Activated CD8-positive, alpha-beta T cell treated with anti-CD3 and anti-CD28 coated beads for 36 hours (primary cell): ENCODE measurements at regions of chr3 and their contacts with region 1.

Region 1: GRCh38 chr3:49539659-49540560 is 14.4 kb upstream of the BSN start:
- DNase-seq: peak; percentile 93
- ATAC-seq: peak; percentile 97
- H3K4me3 Mint-ChIP-seq: peak overlapping the region; percentile 67
- H3K27ac Mint-ChIP-seq: peak overlapping the region; percentile 55
- H3K4me1 Mint-ChIP-seq: peaks cover 5% of the 10 kb centered on the region
- H3K27me3 Mint-ChIP-seq: peaks cover 5% of the 10 kb centered on the region
- CTCF ChIP-seq: peak; percentile 78

Region 2: GRCh38 chr3:48739955-48740823 is 799.7 kb before region 1 on chr3:
- CTCF ChIA-PET with region 1: no interaction called
- POLR2A ChIA-PET with region 1: no interaction called
- intact Hi-C with region 1: no loop called
- DNase-seq: peak; percentile 74
- ATAC-seq: peak; percentile 98
- H3K4me3 Mint-ChIP-seq: no peak overlapping the region
- H3K27ac Mint-ChIP-seq: no peak overlapping the region
- H3K4me1 Mint-ChIP-seq: peaks cover 2% of the 10 kb centered on the region
- H3K27me3 Mint-ChIP-seq: no peaks in the 10 kb centered on the region
- CTCF ChIP-seq: peak; percentile 66

Region 3: GRCh38 chr3:49351521-49352011 is 188.3 kb before region 1 on chr3:
- CTCF ChIA-PET with region 1: no interaction called
- POLR2A ChIA-PET with region 1: no interaction called
- intact Hi-C with region 1: no loop called
- DNase-seq: no peak
- ATAC-seq: no peak
- H3K4me3 Mint-ChIP-seq: no peak overlapping the region
- H3K27ac Mint-ChIP-seq: no peak overlapping the region
- H3K4me1 Mint-ChIP-seq: peaks cover 11% of the 10 kb centered on the region
- H3K27me3 Mint-ChIP-seq: no peaks in the 10 kb centered on the region
- CTCF ChIP-seq: no peak

Region 4: DNA sequence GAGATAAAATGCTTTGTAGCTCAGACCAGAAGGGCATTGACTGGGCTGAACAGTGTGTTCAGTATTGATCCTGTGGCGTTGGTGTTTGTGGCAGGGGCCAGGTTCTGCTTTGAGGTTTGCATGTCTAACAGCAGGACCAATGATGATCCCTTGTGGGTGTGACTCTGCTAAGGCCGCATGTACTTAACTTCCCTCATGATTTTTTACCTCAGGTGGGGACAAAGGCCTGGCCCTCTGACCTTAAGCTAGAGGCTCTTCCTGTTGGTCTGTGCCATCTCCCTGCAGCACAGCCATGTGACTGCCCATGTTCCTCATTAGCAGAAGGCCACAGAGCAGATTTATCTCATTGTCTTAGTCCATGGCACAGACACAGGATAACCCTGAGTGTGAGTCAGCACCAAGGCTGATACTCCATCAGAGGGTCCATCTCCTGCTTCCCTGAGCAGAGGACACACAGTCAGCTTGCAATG is 20.0 kb before region 1 on chr3:
- CTCF ChIA-PET with region 1: interaction called, 10 read pairs
- POLR2A ChIA-PET with region 1: no interaction called
- intact Hi-C with region 1: no loop called
- DNase-seq: no peak
- ATAC-seq: no peak
- H3K4me3 Mint-ChIP-seq: no peak overlapping the region
- H3K27ac Mint-ChIP-seq: no peak overlapping the region
- H3K4me1 Mint-ChIP-seq: peaks cover 5% of the 10 kb centered on the region
- H3K27me3 Mint-ChIP-seq: no peaks in the 10 kb centered on the region
- CTCF ChIP-seq: no peak

Region 5: DNA sequence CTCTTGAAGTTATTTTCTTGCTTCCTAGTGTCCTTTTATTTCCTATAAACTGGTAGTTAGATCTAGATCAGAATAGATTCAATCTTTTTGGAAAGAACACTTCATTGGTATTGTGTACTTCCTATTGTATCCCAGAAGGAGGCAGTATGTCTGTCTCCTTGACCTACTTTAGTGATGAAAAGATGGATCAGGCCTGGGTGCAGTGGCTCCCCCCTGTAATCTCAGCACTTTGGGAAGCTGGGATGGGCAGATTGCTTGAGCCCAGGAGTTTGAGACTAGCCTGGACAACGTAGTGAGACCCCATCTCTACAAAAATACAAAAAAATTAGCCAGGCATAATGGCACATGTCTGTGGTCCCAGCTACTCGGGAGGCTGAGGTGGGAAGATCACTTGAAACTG is 26.4 kb after region 1 on chr3:
- CTCF ChIA-PET with region 1: interaction called, 26 read pairs
- POLR2A ChIA-PET with region 1: no interaction called
- intact Hi-C with region 1: no loop called
- DNase-seq: no peak
- ATAC-seq: no peak
- H3K4me3 Mint-ChIP-seq: no peak overlapping the region
- H3K27ac Mint-ChIP-seq: no peak overlapping the region
- H3K4me1 Mint-ChIP-seq: no peaks in the 10 kb centered on the region
- H3K27me3 Mint-ChIP-seq: no peaks in the 10 kb centered on the region
- CTCF ChIP-seq: peak; percentile 37

Region 6: DNA sequence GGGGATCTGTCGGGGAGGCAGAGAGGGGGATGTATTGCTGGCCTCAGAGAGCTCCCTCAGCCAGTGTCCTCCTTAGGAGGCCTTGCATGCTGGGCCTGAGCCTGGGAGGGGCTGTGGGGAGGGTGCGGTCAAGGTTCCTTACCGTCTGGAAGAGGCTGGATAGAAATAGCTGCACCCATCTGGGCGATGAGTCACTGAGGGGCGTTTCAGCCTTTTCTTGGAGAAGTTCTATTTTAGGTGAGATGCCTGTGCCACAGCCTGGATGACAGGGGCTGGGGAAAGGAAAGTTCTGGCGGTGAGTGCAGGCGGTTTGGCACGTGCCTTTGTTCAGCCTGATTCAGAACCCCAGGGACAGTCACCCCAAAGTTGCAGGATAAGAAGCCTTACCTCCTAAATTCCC is 98.5 kb after region 1 on chr3:
- CTCF ChIA-PET with region 1: interaction called, 10 read pairs
- POLR2A ChIA-PET with region 1: no interaction called
- intact Hi-C with region 1: no loop called
- DNase-seq: no peak
- ATAC-seq: no peak
- H3K4me3 Mint-ChIP-seq: no peak overlapping the region
- H3K27ac Mint-ChIP-seq: no peak overlapping the region
- H3K4me1 Mint-ChIP-seq: peaks cover 4% of the 10 kb centered on the region
- H3K27me3 Mint-ChIP-seq: no peaks in the 10 kb centered on the region
- CTCF ChIP-seq: no peak

Region 7: GRCh38 chr3:49668414-49668797 is 128.5 kb after region 1 on chr3:
- CTCF ChIA-PET with region 1: interaction called, 185 read pairs
- POLR2A ChIA-PET with region 1: interaction called, 37 read pairs
- intact Hi-C with region 1: loop called (anchors 1 kb)
- DNase-seq: no peak
- ATAC-seq: no peak
- H3K4me3 Mint-ChIP-seq: no peak overlapping the region
- H3K27ac Mint-ChIP-seq: no peak overlapping the region
- H3K4me1 Mint-ChIP-seq: peaks cover 12% of the 10 kb centered on the region
- H3K27me3 Mint-ChIP-seq: no peaks in the 10 kb centered on the region
- CTCF ChIP-seq: no peak

Region 8: DNA sequence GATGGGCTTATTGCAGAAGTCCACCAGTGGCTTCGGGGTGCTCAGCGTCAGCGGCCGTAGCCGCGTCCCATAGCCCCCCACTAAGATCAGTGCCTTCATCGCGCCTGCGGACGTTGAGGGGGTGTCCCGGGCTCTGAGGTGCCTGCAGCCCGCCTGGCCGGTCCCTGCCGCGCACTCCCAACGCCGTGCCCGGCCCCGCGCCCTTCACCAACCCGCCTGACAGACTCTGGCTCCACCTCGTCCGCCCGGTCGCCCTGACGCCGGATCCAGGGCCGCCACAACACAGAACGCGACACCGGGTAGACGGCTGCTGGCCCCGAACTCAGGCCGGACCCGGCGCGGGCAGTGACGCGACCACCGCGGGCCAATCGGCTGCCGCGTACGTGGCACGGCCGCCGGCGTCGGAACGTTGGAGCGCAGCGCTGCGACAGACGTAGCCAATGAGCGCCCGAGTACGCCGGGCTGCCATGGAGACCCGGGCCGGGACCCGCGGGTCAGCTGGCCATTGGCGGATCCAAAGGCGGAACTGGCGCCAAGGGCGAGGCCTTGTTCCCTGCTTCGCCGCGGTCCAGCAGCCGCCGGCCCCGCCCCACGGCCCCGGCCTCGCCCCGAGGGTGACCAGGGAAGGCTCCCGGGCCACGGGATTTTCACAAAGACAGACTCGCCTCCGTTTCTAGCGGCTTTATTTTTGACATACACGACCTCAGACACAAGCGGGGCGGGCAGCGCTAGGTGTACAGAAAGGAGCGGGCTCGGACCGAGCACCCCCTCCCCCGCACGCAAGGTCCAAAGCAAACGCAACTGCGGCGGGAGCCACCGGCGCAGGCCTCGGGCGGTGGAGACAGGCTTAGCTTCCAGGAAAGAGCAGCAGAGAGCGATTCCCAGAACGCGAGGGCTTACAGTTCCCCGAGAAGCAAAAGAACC is 184.0 kb after region 1 on chr3 and contains the start of gene GMPPB:
- CTCF ChIA-PET with region 1: interaction called, 11 read pairs
- POLR2A ChIA-PET with region 1: interaction called, 3 read pairs
- intact Hi-C with region 1: no loop called
- DNase-seq: peak; percentile 96
- ATAC-seq: peak; percentile 82
- H3K4me3 Mint-ChIP-seq: peak within 1 kb of the TSS; percentile 92
- H3K27ac Mint-ChIP-seq: peak within 1 kb of the TSS; percentile 97
- H3K4me1 Mint-ChIP-seq: peaks cover 21% of the 10 kb centered on the region
- H3K27me3 Mint-ChIP-seq: no peaks in the 10 kb centered on the region
- CTCF ChIP-seq: no peak
- total RNA-seq, gene GMPPB: 34.7 to 35.2 TPM

Region 9: GRCh38 chr3:49865198-49865745 is 325.4 kb after region 1 on chr3:
- CTCF ChIA-PET with region 1: no interaction called
- POLR2A ChIA-PET with region 1: no interaction called
- intact Hi-C with region 1: no loop called
- DNase-seq: no peak
- ATAC-seq: no peak
- H3K4me3 Mint-ChIP-seq: no peak overlapping the region
- H3K27ac Mint-ChIP-seq: no peak overlapping the region
- H3K4me1 Mint-ChIP-seq: no peaks in the 10 kb centered on the region
- H3K27me3 Mint-ChIP-seq: peaks cover 28% of the 10 kb centered on the region
- CTCF ChIP-seq: no peak